Motor neuron (in vitro differentiated cells): ENCODE measurements at regions of chr5 and their contacts with region 1.

Region 1: GRCh38 chr5:148179234-148179824 is 11.0 kb downstream of the SPINK14 start:
- ATAC-seq: peak in 3 of 8 experiments; percentile 42 to 59 (median 50)
- H3K4me3 ChIP-seq: no peak overlapping the region
- H3K27ac ChIP-seq: no peak overlapping the region
- H3K4me1 ChIP-seq: no peaks in the 10 kb centered on the region

Region 2: GRCh38 chr5:146965761-146966659 is 1213.3 kb before region 1 on chr5:
- in situ Hi-C with region 1: no loop called
- ATAC-seq: peak; percentile 86 to 94 (median 91)
- H3K4me3 ChIP-seq: no peak overlapping the region
- H3K27ac ChIP-seq: no peak overlapping the region
- H3K4me1 ChIP-seq: peaks cover 11 to 15% of the 10 kb centered on the region in 2 donors

Region 3: GRCh38 chr5:148314204-148314603 is 134.9 kb after region 1 on chr5:
- in situ Hi-C with region 1: no loop called
- ATAC-seq: no peak
- H3K4me3 ChIP-seq: no peak overlapping the region
- H3K27ac ChIP-seq: no peak overlapping the region
- H3K4me1 ChIP-seq: no peaks in the 10 kb centered on the region

Region 4: GRCh38 chr5:148368299-148368698 is 189.0 kb after region 1 on chr5:
- in situ Hi-C with region 1: loop called in 2 of 9 experiments (anchors 5 to 25 kb)
- ATAC-seq: no peak
- H3K4me3 ChIP-seq: no peak overlapping the region
- H3K27ac ChIP-seq: no peak overlapping the region
- H3K4me1 ChIP-seq: no peaks in the 10 kb centered on the region

Region 5: DNA sequence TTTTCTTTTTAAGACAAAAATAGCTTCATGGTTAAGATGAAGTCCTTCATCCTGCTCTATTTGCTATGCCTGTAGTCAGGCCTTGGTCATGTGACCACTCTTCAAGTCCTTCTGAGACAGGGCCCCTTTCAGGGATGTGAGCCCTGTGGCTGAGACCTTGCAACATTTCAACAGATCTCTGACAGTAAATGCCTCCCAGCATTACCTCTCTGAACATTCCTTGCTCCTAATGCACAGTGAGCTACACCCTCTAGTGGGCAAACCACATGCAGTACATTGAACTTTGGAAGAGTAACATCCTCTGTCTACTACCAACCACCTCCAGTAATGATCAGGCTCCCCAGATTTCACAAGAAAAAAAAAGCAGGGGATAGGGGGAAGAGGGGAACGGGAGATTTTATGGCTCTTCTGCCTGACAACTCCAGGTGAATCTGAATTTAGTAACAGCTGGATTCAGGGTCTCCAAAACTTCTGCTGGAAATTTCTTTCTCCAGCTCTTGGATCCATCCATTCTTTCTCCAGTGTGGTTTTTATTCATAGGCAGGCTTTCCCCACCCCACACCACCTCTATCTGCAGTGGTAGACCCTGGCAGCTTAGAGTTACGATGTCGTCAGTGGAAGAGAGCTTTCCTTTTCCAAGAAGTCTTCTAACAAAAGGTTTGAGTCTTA is 195.5 kb after region 1 on chr5:
- in situ Hi-C with region 1: loop called in 1 of 9 experiments (anchors 25 kb)
- ATAC-seq: peak in 7 of 8 experiments; percentile 36 to 99 (median 98)
- H3K4me3 ChIP-seq: no peak overlapping the region
- H3K27ac ChIP-seq: no peak overlapping the region
- H3K4me1 ChIP-seq: no peaks in the 10 kb centered on the region

Region 6: GRCh38 chr5:148708854-148709253 is 529.5 kb after region 1 on chr5:
- in situ Hi-C with region 1: loop called in 2 of 9 experiments (anchors 25 kb)
- ATAC-seq: no peak
- H3K4me3 ChIP-seq: no peak overlapping the region
- H3K27ac ChIP-seq: no peak overlapping the region
- H3K4me1 ChIP-seq: no peaks in the 10 kb centered on the region